Panc1 (cell line): ENCODE measurements at regions of chr2 and their contacts with region 1.

Region 1: GRCh38 chr2:16773080-16773713 is 107.6 kb upstream of the CYRIA start:
- DNase-seq: peak; percentile 15
- ATAC-seq: peak; percentile 71; the same call in 1 of the 2 replicates
- H3K4me3 ChIP-seq: no peak overlapping the region
- H3K27ac ChIP-seq: no peak overlapping the region
- H3K4me1 ChIP-seq: no peaks in the 10 kb centered on the region
- H3K27me3 ChIP-seq: peaks cover 3% of the 10 kb centered on the region; the same call in 1 of the 2 replicates
- CTCF ChIP-seq: peak; percentile 76

Region 2: DNA sequence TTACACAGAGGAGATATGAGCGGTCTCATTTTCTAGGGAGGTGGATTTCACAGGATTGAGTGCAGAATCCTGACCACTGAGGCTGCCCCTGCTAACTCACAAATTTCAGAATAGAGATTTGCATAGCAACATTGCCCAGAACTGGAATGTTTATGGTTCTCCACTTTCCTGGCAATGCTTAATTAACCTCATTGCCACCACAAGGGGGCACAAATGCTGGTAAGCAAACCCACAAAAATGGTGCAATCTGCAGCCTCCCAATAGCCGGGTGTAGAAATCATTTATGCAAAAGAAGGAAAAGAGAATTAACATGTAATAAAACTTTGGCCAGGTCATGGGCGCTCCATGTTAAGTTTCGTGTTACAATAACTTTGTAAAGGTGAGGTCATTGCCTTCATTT is 220.0 kb before region 1 on chr2:
- CTCF ChIA-PET with region 1: no interaction called
- POLR2A ChIA-PET with region 1: no interaction called
- in situ Hi-C with region 1: no loop called
- intact Hi-C with region 1: no loop called
- DNase-seq: no peak
- ATAC-seq: no peak
- H3K4me3 ChIP-seq: no peak overlapping the region
- H3K27ac ChIP-seq: no peak overlapping the region
- H3K4me1 ChIP-seq: no peaks in the 10 kb centered on the region
- H3K27me3 ChIP-seq: no peaks in the 10 kb centered on the region
- CTCF ChIP-seq: peak; percentile 67

Region 3: GRCh38 chr2:16613539-16614011 is 159.6 kb before region 1 on chr2:
- CTCF ChIA-PET with region 1: no interaction called
- POLR2A ChIA-PET with region 1: no interaction called
- in situ Hi-C with region 1: no loop called
- intact Hi-C with region 1: no loop called
- DNase-seq: no peak
- ATAC-seq: no peak
- H3K4me3 ChIP-seq: no peak overlapping the region
- H3K27ac ChIP-seq: no peak overlapping the region
- H3K4me1 ChIP-seq: no peaks in the 10 kb centered on the region
- H3K27me3 ChIP-seq: peaks cover 8% of the 10 kb centered on the region
- CTCF ChIP-seq: peak; percentile 59; the same call in 1 of the 2 replicates

Region 4: GRCh38 chr2:16727256-16727655 is 45.9 kb before region 1 on chr2:
- CTCF ChIA-PET with region 1: no interaction called
- POLR2A ChIA-PET with region 1: no interaction called
- in situ Hi-C with region 1: no loop called
- intact Hi-C with region 1: no loop called
- DNase-seq: no peak
- ATAC-seq: no peak
- H3K4me3 ChIP-seq: no peak overlapping the region
- H3K27ac ChIP-seq: no peak overlapping the region
- H3K4me1 ChIP-seq: no peaks in the 10 kb centered on the region
- H3K27me3 ChIP-seq: peaks cover 6% of the 10 kb centered on the region
- CTCF ChIP-seq: no peak

Region 5: GRCh38 chr2:16899958-16900357 is 126.8 kb after region 1 on chr2:
- CTCF ChIA-PET with region 1: no interaction called
- POLR2A ChIA-PET with region 1: no interaction called
- in situ Hi-C with region 1: no loop called
- intact Hi-C with region 1: loop called (anchors 5 kb)
- DNase-seq: no peak
- ATAC-seq: no peak
- H3K4me3 ChIP-seq: no peak overlapping the region
- H3K27ac ChIP-seq: no peak overlapping the region
- H3K4me1 ChIP-seq: no peaks in the 10 kb centered on the region
- H3K27me3 ChIP-seq: no peaks in the 10 kb centered on the region
- CTCF ChIP-seq: no peak

Region 6: GRCh38 chr2:17148407-17149145 is 375.4 kb after region 1 on chr2:
- CTCF ChIA-PET with region 1: no interaction called
- POLR2A ChIA-PET with region 1: no interaction called
- in situ Hi-C with region 1: no loop called
- intact Hi-C with region 1: loop called (anchors 10 kb)
- DNase-seq: no peak
- ATAC-seq: no peak
- H3K4me3 ChIP-seq: no peak overlapping the region
- H3K27ac ChIP-seq: no peak overlapping the region
- H3K4me1 ChIP-seq: no peaks in the 10 kb centered on the region
- H3K27me3 ChIP-seq: no peaks in the 10 kb centered on the region
- CTCF ChIP-seq: peak; percentile 25; the same call in 1 of the 2 replicates

Region 7: DNA sequence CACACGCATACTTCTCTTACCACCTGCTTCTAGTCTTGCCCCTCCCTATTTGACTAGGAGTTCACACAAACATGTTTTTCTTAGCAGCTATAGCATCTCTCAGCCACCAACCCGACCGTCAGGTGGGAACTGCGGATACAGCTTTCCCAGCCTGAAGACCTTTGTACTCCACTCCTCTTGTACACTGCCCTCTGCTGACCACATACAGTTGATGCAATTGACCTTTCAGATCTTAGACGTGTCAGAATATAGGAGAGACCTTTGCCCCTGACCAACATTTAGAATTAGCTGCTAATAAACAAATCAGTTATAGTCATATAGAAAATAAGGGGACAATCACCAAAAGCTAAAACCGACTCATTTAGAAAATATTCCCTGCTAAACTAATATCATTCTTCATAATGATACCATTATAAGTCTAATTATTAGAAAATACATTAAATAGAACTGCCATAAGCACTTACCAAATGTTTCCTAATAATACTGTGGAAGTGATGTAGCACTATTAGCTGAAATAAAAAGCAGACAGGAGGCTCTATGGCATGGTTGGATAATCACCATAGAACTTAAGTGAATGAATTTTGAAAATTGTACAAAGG is 536.6 kb after region 1 on chr2:
- CTCF ChIA-PET with region 1: interaction called, 3 read pairs
- POLR2A ChIA-PET with region 1: no interaction called
- in situ Hi-C with region 1: no loop called
- intact Hi-C with region 1: loop called (anchors 1 kb)
- DNase-seq: peak; percentile 20
- ATAC-seq: peak; percentile 76
- H3K4me3 ChIP-seq: no peak overlapping the region
- H3K27ac ChIP-seq: no peak overlapping the region
- H3K4me1 ChIP-seq: no peaks in the 10 kb centered on the region
- H3K27me3 ChIP-seq: no peaks in the 10 kb centered on the region
- CTCF ChIP-seq: peak; percentile 80

Region 8: GRCh38 chr2:17672583-17673317 is 899.6 kb after region 1 on chr2:
- CTCF ChIA-PET with region 1: no interaction called
- POLR2A ChIA-PET with region 1: no interaction called
- in situ Hi-C with region 1: no loop called
- intact Hi-C with region 1: loop called (anchors 10 kb)
- DNase-seq: no peak
- ATAC-seq: no peak
- H3K4me3 ChIP-seq: no peak overlapping the region
- H3K27ac ChIP-seq: no peak overlapping the region
- H3K4me1 ChIP-seq: no peaks in the 10 kb centered on the region
- H3K27me3 ChIP-seq: no peaks in the 10 kb centered on the region
- CTCF ChIP-seq: no peak; the same call in 1 of the 2 replicates